ENCODE measurements at regions of chr21 and their contacts with region 1.

Region 1: DNA sequence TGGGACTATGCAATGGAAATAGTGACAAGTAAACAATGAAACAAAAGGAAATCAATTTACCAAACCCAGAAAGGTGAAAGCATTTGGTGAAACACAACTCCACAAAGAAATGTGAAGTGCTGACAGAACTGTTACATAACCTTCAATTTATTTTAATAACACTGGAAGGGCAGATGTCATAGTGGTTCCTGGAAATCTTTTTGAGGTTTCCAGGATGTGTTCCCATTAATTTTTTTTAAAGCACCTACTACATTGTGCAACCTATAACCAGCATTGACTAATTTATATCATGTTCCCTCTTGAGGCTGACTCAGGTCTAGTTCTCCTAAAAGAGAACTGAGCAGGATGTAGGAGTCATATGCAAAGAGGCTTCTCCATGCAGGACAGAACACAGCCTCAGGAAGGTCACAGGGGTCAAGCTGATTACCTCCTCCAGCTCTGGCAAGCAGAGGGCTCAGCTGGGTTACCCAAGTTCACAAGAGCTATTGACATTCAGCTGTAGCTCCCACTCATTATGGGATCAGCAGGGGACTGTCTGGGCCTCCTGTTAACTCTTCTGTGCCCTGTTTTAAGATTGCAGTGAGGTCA is 157.1 kb upstream of the NRIP1 start:
- DNase-seq: peak; percentile 45
- H3K4me3 Mint-ChIP-seq: no peak overlapping the region
- H3K27ac Mint-ChIP-seq: peak overlapping the region; percentile 18
- H3K4me1 Mint-ChIP-seq: peaks cover 8% of the 10 kb centered on the region
- H3K27me3 Mint-ChIP-seq: peaks cover 3% of the 10 kb centered on the region

Region 2: DNA sequence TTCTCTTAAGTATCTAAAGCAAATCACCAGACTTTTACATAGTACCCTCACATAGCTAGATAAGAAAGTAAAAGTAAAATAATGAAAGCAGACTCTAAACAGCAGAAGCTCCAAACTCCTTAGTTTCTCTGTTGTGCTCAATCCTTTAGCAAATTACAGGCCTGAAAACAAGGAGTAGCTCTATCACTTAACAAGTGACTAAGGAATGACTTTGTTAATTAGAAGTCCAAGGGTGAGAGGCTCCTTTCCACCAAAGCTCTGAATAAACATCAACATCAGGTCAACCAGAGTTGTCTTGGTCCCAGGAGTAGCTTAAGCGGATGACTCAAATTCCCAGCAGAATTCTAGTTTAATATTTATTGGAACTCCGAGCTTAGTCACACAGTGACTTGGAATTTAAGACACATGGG is 163.0 kb before region 1 on chr21:
- CTCF ChIA-PET with region 1: no interaction called
- POLR2A ChIA-PET with region 1: no interaction called
- intact Hi-C with region 1: no loop called
- DNase-seq: no peak
- H3K4me3 Mint-ChIP-seq: peak overlapping the region; percentile 44
- H3K27ac Mint-ChIP-seq: no peak overlapping the region
- H3K4me1 Mint-ChIP-seq: peaks cover 72% of the 10 kb centered on the region
- H3K27me3 Mint-ChIP-seq: peaks cover 9% of the 10 kb centered on the region

Region 3: GRCh38 chr21:15408089-15408488 is 186.2 kb after region 1 on chr21:
- CTCF ChIA-PET with region 1: no interaction called
- POLR2A ChIA-PET with region 1: no interaction called
- intact Hi-C with region 1: no loop called
- DNase-seq: no peak
- H3K4me3 Mint-ChIP-seq: no peak overlapping the region
- H3K27ac Mint-ChIP-seq: no peak overlapping the region
- H3K4me1 Mint-ChIP-seq: no peaks in the 10 kb centered on the region
- H3K27me3 Mint-ChIP-seq: no peaks in the 10 kb centered on the region

Region 4: GRCh38 chr21:15422783-15423182 is 200.9 kb after region 1 on chr21:
- CTCF ChIA-PET with region 1: no interaction called
- POLR2A ChIA-PET with region 1: no interaction called
- intact Hi-C with region 1: loop called (anchors 1 kb)
- DNase-seq: peak; percentile 15
- H3K4me3 Mint-ChIP-seq: no peak overlapping the region
- H3K27ac Mint-ChIP-seq: peak overlapping the region; percentile 16
- H3K4me1 Mint-ChIP-seq: peaks cover 32% of the 10 kb centered on the region
- H3K27me3 Mint-ChIP-seq: no peaks in the 10 kb centered on the region